Activated CD4-positive, alpha-beta memory T cell treated with anti-CD3 and anti-CD28 coated beads for 36 hours (primary cell): ENCODE measurements at regions of chr16 and their contacts with region 1.

Region 1: GRCh38 chr16:30585400-30586189 is at the start of gene ZNF785:
- DNase-seq: peak; percentile 97
- H3K4me3 Mint-ChIP-seq: peak within 1 kb of the TSS; percentile 83
- H3K27ac Mint-ChIP-seq: peak within 1 kb of the TSS; percentile 83
- H3K4me1 Mint-ChIP-seq: peaks cover 32% of the 10 kb centered on the region
- H3K27me3 Mint-ChIP-seq: no peaks in the 10 kb centered on the region
- total RNA-seq, gene ZNF785: 14.0 to 15.0 TPM

Region 2: GRCh38 chr16:30557957-30558788 is 27.4 kb before region 1 on chr16 and contains the start of gene ZNF764:
- CTCF ChIA-PET with region 1: interaction called, 5 read pairs
- POLR2A ChIA-PET with region 1: interaction called, 11 read pairs
- intact Hi-C with region 1: no loop called
- DNase-seq: peak; percentile 99
- H3K4me3 Mint-ChIP-seq: peak within 1 kb of the TSS; percentile 89
- H3K27ac Mint-ChIP-seq: peak within 1 kb of the TSS; percentile 96
- H3K4me1 Mint-ChIP-seq: peaks cover 38% of the 10 kb centered on the region
- H3K27me3 Mint-ChIP-seq: no peaks in the 10 kb centered on the region
- total RNA-seq, gene ZNF764: 13.7 to 14.2 TPM